ENCODE measurements at regions of chr11 and their contacts with region 1.

Region 1: GRCh38 chr11:33970984-33971466 is 79.1 kb upstream of the LMO2 start:
- DNase-seq: peak; percentile 69
- ATAC-seq: peak; percentile 93
- H3K4me3 ChIP-seq: no peak overlapping the region
- H3K27ac ChIP-seq: no peak overlapping the region
- H3K4me1 ChIP-seq: no peaks in the 10 kb centered on the region
- H3K27me3 ChIP-seq: no peaks in the 10 kb centered on the region
- CTCF ChIP-seq: peak; percentile 80

Region 2: GRCh38 chr11:33835143-33835878 is 135.7 kb before region 1 on chr11:
- CTCF ChIA-PET with region 1: no interaction called
- POLR2A ChIA-PET with region 1: no interaction called
- intact Hi-C with region 1: loop called (anchors 1 kb)
- DNase-seq: peak; percentile 63
- ATAC-seq: peak; percentile 42
- H3K4me3 ChIP-seq: peak overlapping the region; percentile 42; the same call in 1 of the 2 replicates
- H3K27ac ChIP-seq: no peak overlapping the region
- H3K4me1 ChIP-seq: peaks cover 25% of the 10 kb centered on the region
- H3K27me3 ChIP-seq: peaks cover 8% of the 10 kb centered on the region; the same call in 1 of the 2 replicates
- CTCF ChIP-seq: peak; percentile 60

Region 3: GRCh38 chr11:33857933-33858371 is 113.1 kb before region 1 on chr11:
- CTCF ChIA-PET with region 1: interaction called, 3 read pairs
- POLR2A ChIA-PET with region 1: no interaction called
- intact Hi-C with region 1: loop called (anchors 1 kb)
- DNase-seq: peak; percentile 78
- ATAC-seq: peak; percentile 94
- H3K4me3 ChIP-seq: no peak overlapping the region
- H3K27ac ChIP-seq: no peak overlapping the region
- H3K4me1 ChIP-seq: no peaks in the 10 kb centered on the region
- H3K27me3 ChIP-seq: peaks cover 48% of the 10 kb centered on the region
- CTCF ChIP-seq: peak; percentile 95

Region 4: DNA sequence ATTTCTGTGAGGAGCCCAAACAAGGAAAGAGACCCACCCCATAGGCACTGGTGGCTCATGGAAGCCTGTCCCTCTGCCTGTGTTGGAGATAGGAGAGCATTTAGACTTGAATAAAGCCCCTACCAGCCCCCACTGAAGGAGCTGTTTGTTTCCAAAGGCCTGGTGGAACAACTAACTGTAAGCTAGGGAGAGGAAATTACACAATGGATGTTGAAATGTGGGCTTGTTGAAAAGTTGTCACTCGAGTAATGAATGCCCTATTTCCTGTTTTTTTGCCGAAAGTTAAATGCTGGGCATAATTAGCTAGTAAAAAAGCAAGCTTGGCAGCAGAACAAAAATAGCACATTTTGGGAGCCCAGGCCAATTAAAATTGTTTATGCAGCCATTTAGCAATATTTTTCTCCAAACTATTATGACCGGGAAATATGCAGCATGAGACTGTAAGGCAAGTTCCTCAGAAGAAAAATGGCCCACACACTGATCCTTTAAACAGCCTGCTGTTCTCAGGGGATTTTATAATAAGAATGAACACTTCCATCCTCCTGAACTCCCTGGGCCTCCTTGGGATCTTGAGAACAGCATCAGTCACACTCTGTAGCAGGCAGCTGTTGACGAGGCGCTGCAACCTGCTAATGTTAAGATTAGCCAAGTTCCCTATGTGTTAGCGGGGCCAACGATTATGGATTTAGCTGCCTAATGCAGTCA is 40.6 kb before region 1 on chr11:
- CTCF ChIA-PET with region 1: no interaction called
- POLR2A ChIA-PET with region 1: no interaction called
- intact Hi-C with region 1: no loop called
- DNase-seq: no peak
- ATAC-seq: no peak
- H3K4me3 ChIP-seq: no peak overlapping the region
- H3K27ac ChIP-seq: no peak overlapping the region
- H3K4me1 ChIP-seq: no peaks in the 10 kb centered on the region
- H3K27me3 ChIP-seq: peaks cover 10% of the 10 kb centered on the region; the same call in 1 of the 2 replicates
- CTCF ChIP-seq: no peak

Region 5: DNA sequence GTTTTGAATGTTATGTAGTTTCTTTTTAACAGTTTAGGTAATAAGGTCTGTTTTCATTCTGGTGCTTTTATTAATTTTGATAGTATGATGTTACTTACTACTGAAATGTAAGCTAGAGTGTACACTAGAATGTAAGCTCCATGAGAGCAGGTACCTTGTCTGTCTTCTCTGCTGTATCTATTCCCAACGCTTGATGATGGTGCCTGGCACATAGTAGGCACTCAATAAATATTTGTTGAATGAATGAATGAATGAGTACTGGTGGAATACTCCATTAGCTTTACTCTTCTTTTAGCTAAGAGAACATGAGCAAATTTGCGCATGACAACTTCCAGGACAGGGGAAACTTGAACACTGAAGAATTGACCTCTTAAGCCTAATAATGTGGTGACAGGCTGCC is 127.8 kb after region 1 on chr11:
- CTCF ChIA-PET with region 1: no interaction called
- POLR2A ChIA-PET with region 1: no interaction called
- intact Hi-C with region 1: no loop called
- DNase-seq: no peak
- ATAC-seq: no peak
- H3K4me3 ChIP-seq: no peak overlapping the region
- H3K27ac ChIP-seq: no peak overlapping the region
- H3K4me1 ChIP-seq: no peaks in the 10 kb centered on the region
- H3K27me3 ChIP-seq: no peaks in the 10 kb centered on the region
- CTCF ChIP-seq: no peak